H1 (cell line): ENCODE measurements at regions of chr19 and their contacts with region 1.

Region 1: DNA sequence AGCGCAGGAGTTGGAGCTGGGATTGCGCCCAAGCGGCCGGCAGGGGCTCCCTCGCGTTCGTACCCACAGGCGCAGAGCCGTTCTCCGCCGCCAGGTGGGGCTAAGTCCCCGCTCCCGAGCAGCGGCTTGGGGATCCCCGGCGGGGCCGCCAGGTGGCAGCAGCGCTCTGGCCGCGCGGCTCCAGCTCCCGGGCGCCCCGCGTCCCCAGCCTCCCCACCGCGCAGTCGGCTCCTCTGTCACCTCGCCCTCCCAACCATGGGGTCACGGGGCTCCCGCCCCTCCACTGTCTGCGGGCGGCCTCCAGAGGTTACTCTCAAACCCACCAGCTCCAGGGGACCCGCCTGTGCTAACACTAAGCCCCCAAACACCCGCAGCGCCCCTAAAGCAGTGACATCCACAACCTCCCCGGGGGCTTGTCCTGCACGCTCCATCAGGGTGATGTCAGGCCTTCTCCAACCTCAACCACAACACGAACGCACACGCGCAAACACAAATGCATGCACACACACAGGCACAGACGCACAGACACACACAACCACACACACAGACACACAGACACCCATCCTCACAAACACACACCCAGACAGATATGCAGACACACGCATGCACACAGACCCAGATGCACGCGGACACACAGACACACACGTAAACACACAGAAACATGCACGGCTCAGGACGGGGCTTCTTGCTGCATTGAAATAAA is 18.4 kb upstream of the KCTD15 start:
- DNase-seq: peak in 1 of 2 experiments; percentile 99
- H3K4me3 ChIP-seq: peak overlapping the region in 2 of 4 experiments; percentile 20 to 46; a peak in 4 of 8 replicates
- H3K27ac ChIP-seq: no peak overlapping the region
- H3K4me1 ChIP-seq: peaks cover 0 to 7% (median 4%) of the 10 kb centered on the region in 4 experiments; a peak in 4 of 7 replicates
- H3K27me3 ChIP-seq: peaks cover 0 to 3% (median 0%) of the 10 kb centered on the region in 4 experiments; a peak in 3 of 7 replicates
- CTCF ChIP-seq: peak; percentile 100
- EP300 ChIP-seq: no peak
- POLR2A ChIP-seq: no peak
- RAD21 ChIP-seq: peak; percentile 98 to 99

Region 2: GRCh38 chr19:33416307-33417215 is 361.7 kb before region 1 on chr19:
- CTCF ChIA-PET with region 1: interaction called, 15 read pairs
- POLR2A ChIA-PET with region 1: no interaction called
- DNase-seq: peak; percentile 29 to 91
- H3K4me3 ChIP-seq: peak overlapping the region in 3 of 4 experiments; percentile 8 to 40 (median 34); a peak in 2 of 8 replicates
- H3K27ac ChIP-seq: no peak overlapping the region
- H3K4me1 ChIP-seq: peaks cover 0 to 12% (median 4%) of the 10 kb centered on the region in 4 experiments; a peak in 4 of 7 replicates
- H3K27me3 ChIP-seq: no peaks in the 10 kb centered on the region; a peak in 1 of 7 replicates
- CTCF ChIP-seq: peak; percentile 77 to 85 (median 81)
- EP300 ChIP-seq: no peak
- POLR2A ChIP-seq: no peak
- RAD21 ChIP-seq: peak; percentile 73 to 78

Region 3: GRCh38 chr19:33795370-33796163 is 17.3 kb after region 1 on chr19:
- CTCF ChIA-PET with region 1: interaction called, 23 read pairs
- POLR2A ChIA-PET with region 1: interaction called, 14 read pairs
- DNase-seq: peak in 1 of 2 experiments; percentile 90
- H3K4me3 ChIP-seq: peak overlapping the region; percentile 40 to 91 (median 58)
- H3K27ac ChIP-seq: peak overlapping the region; percentile 92
- H3K4me1 ChIP-seq: peaks cover 7 to 18% (median 16%) of the 10 kb centered on the region in 4 experiments
- H3K27me3 ChIP-seq: no peaks in the 10 kb centered on the region; a peak in 2 of 7 replicates
- CTCF ChIP-seq: peak; percentile 57 to 93 (median 61)
- EP300 ChIP-seq: peak in 1 of 2 experiments; percentile 96; a peak in 1 of 3 replicates
- POLR2A ChIP-seq: peak; percentile 61 to 76
- RAD21 ChIP-seq: peak; percentile 34 to 69; a peak in 3 of 4 replicates

Region 4: DNA sequence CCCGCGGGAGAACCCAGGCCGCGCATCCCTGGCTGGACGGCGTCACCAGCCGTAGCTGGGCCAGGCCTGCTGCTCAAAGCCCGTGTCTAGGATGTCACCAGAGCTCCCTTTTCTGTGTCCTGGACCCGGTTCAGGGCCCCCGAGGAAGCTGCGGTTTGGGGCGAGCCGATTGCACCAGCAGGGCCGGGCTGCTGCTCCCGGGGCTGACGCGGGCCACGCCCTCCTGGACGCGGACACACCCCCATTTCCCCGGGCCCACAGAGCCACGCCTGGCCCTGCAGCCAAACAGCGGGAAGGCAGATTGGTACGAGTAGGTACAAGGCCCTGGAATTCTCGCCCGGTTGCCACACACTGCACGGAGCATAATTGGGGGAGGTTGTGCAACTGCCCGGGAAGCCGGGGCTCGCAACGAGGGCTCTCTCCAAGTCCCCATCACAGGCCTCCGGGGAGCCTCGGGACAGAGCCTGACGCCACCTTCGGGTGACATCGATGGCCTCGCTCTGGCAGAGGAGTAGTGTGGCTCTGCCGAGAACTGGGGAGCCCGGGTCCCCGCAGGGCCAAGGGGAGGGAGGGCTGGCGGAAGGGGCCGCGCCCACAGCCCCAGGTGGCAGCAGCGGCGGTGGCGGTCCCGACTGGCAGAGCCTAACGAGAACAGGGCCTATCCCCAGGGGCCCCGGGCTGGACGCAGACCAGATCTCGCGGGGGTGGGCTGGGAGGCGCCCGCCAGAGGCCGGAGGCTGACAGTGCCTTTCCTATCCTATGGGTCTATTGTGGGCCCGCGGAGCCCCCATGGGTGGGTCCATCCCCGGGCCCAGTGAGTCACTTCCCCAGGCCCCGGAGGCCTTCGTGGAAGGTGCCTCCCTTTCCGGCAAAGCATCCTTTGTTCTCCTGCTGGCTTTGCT is 41.9 kb after region 1 on chr19:
- CTCF ChIA-PET with region 1: interaction called, 17 read pairs
- POLR2A ChIA-PET with region 1: no interaction called
- DNase-seq: peak in 1 of 2 experiments; percentile 89
- H3K4me3 ChIP-seq: peak overlapping the region; percentile 57 to 71 (median 62)
- H3K27ac ChIP-seq: no peak overlapping the region
- H3K4me1 ChIP-seq: peaks cover 0 to 12% (median 7%) of the 10 kb centered on the region in 4 experiments; a peak in 6 of 7 replicates
- H3K27me3 ChIP-seq: peaks cover 0 to 7% (median 4%) of the 10 kb centered on the region in 4 experiments; a peak in 5 of 7 replicates
- CTCF ChIP-seq: no peak
- EP300 ChIP-seq: no peak
- POLR2A ChIP-seq: no peak
- RAD21 ChIP-seq: peak; percentile 0 to 3; a peak in 2 of 4 replicates

Region 5: GRCh38 chr19:33841685-33842084 is 63.4 kb after region 1 on chr19:
- CTCF ChIA-PET with region 1: no interaction called
- POLR2A ChIA-PET with region 1: no interaction called
- DNase-seq: no peak
- H3K4me3 ChIP-seq: no peak overlapping the region
- H3K27ac ChIP-seq: no peak overlapping the region
- H3K4me1 ChIP-seq: no peaks in the 10 kb centered on the region
- H3K27me3 ChIP-seq: no peaks in the 10 kb centered on the region
- CTCF ChIP-seq: no peak
- EP300 ChIP-seq: no peak
- POLR2A ChIP-seq: no peak
- RAD21 ChIP-seq: no peak

Region 6: DNA sequence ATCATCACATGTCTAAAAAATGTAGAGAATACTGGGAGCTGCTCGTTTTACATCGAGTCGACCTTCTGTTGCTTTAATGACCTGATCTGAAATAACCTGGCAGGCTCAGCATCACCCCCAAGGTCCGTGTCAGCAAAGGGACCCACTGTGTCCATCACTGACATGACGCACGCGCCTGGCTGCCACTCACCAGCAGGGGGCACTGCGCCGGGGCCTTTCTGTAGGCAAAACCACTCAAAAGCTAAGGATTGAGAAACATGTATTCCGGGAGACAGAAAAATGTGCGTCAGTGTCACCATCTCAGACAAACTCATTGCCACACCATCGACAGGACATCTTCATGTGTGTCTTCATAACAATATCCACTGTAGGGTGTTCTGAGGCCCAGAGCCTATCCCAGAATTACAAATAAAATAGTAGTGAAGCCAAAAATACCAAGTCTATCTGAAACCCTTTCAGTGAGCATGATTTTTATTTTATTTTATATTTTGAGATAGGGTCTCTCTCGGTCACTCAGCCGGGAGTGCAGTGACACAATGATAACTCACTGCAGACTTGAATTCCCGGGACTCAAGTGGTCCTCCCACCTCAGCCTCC is 263.8 kb after region 1 on chr19:
- CTCF ChIA-PET with region 1: interaction called, 14 read pairs
- POLR2A ChIA-PET with region 1: no interaction called
- DNase-seq: peak; percentile 25 to 95
- H3K4me3 ChIP-seq: no peak overlapping the region
- H3K27ac ChIP-seq: no peak overlapping the region
- H3K4me1 ChIP-seq: no peaks in the 10 kb centered on the region
- H3K27me3 ChIP-seq: no peaks in the 10 kb centered on the region
- CTCF ChIP-seq: peak; percentile 91 to 97 (median 91)
- EP300 ChIP-seq: no peak
- POLR2A ChIP-seq: no peak
- RAD21 ChIP-seq: peak; percentile 69 to 84

Region 7: DNA sequence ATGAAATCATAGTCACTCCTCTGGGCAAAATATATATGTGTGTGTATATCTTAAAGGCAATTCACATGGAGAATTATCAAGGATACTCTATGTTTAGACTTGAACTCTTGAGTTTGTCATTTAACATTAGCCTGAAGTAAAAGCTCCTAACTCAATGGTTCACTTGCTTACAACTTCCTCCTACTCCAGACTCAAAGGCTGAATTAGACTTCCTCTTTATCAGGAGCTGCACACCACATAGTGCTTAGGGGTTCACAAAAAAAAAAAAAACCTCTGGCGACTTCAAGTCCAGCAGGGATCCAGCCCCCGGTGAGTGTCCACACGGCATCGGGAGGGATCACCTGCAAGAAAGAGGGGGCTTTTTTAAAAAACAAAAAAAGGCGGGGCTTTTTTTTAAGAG is 325.9 kb after region 1 on chr19:
- CTCF ChIA-PET with region 1: interaction called, 43 read pairs
- POLR2A ChIA-PET with region 1: no interaction called
- DNase-seq: no peak
- H3K4me3 ChIP-seq: no peak overlapping the region
- H3K27ac ChIP-seq: no peak overlapping the region
- H3K4me1 ChIP-seq: no peaks in the 10 kb centered on the region
- H3K27me3 ChIP-seq: no peaks in the 10 kb centered on the region
- CTCF ChIP-seq: no peak
- EP300 ChIP-seq: no peak
- POLR2A ChIP-seq: no peak
- RAD21 ChIP-seq: no peak

Region 8: DNA sequence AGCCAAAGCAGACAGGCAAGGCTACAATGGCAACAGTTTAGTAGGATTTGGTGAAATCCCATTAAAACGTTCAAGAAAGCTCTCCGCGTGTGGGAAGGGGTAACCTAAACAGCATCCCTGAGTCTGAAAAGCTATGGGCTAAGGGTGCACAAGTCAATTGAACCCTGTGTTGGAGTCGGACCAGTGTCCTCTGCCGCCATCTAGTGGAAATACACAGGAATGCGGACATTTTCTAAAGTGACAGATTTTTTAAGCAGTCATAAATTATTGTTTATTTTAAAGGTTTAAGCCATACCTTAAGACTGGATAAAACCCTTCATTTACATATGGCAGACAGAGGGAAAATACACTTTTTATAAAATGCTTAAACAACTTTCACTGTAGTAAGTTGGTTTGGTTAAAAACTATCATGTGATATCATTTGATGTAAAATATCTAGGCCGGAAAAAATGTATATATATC is 367.5 kb after region 1 on chr19:
- CTCF ChIA-PET with region 1: interaction called, 66 read pairs
- POLR2A ChIA-PET with region 1: interaction called, 6 read pairs
- DNase-seq: peak in 1 of 2 experiments; percentile 53
- H3K4me3 ChIP-seq: no peak overlapping the region
- H3K27ac ChIP-seq: no peak overlapping the region
- H3K4me1 ChIP-seq: no peaks in the 10 kb centered on the region
- H3K27me3 ChIP-seq: no peaks in the 10 kb centered on the region
- CTCF ChIP-seq: peak; percentile 57 to 87 (median 81)
- EP300 ChIP-seq: no peak
- POLR2A ChIP-seq: no peak
- RAD21 ChIP-seq: peak; percentile 91 to 92